HepG2 (cell line): ENCODE measurements at regions of chr20 and their contacts with region 1.

Region 1: GRCh38 chr20:32743237-32744112 is at the start of gene COMMD7:
- DNase-seq: peak; percentile 50
- ATAC-seq: peak; percentile 88
- H3K4me3 ChIP-seq: peak within 1 kb of the TSS; percentile 80 to 99 (median 94)
- H3K27ac ChIP-seq: peak within 1 kb of the TSS; percentile 44
- H3K4me1 ChIP-seq: peaks cover 54% of the 10 kb centered on the region
- H3K27me3 ChIP-seq: no peaks in the 10 kb centered on the region; a peak in 1 of 5 replicates
- CTCF ChIP-seq: no peak
- EP300 ChIP-seq: no peak
- POLR2A ChIP-seq: peak; percentile 3 to 44; a peak in 2 of 4 replicates
- RAD21 ChIP-seq: peak; percentile 79
- total RNA-seq, gene COMMD7: 42.1 and 50.7 TPM in 2 replicates

Region 2: GRCh38 chr20:32674362-32674789 is 69.1 kb before region 1 on chr20:
- CTCF ChIA-PET with region 1: no interaction called
- POLR2A ChIA-PET with region 1: interaction called, 4 read pairs
- in situ Hi-C with region 1: no loop called
- intact Hi-C with region 1: loop called (anchors 2 kb)
- DNase-seq: peak; percentile 64
- ATAC-seq: peak; percentile 51
- H3K4me3 ChIP-seq: peak overlapping the region in 1 of 3 experiments; percentile 71; a peak in 1 of 6 replicates
- H3K27ac ChIP-seq: no peak overlapping the region
- H3K4me1 ChIP-seq: peaks cover 65% of the 10 kb centered on the region
- H3K27me3 ChIP-seq: no peaks in the 10 kb centered on the region
- CTCF ChIP-seq: peak; percentile 92
- EP300 ChIP-seq: no peak
- POLR2A ChIP-seq: no peak
- RAD21 ChIP-seq: peak; percentile 98

Region 3: GRCh38 chr20:32718731-32719348 is 24.6 kb before region 1 on chr20:
- CTCF ChIA-PET with region 1: no interaction called
- POLR2A ChIA-PET with region 1: no interaction called
- in situ Hi-C with region 1: no loop called
- intact Hi-C with region 1: no loop called
- DNase-seq: no peak
- ATAC-seq: no peak
- H3K4me3 ChIP-seq: no peak overlapping the region
- H3K27ac ChIP-seq: no peak overlapping the region
- H3K4me1 ChIP-seq: peaks cover 8% of the 10 kb centered on the region
- H3K27me3 ChIP-seq: no peaks in the 10 kb centered on the region
- CTCF ChIP-seq: no peak
- EP300 ChIP-seq: no peak
- POLR2A ChIP-seq: no peak
- RAD21 ChIP-seq: no peak

Region 4: GRCh38 chr20:32731393-32732266 is 11.8 kb before region 1 on chr20:
- CTCF ChIA-PET with region 1: no interaction called
- POLR2A ChIA-PET with region 1: interaction called, 12 read pairs
- in situ Hi-C with region 1: no loop called
- intact Hi-C with region 1: no loop called
- DNase-seq: peak; percentile 89
- ATAC-seq: peak; percentile 88
- H3K4me3 ChIP-seq: no peak overlapping the region
- H3K27ac ChIP-seq: peak overlapping the region; percentile 32
- H3K4me1 ChIP-seq: peaks cover 16% of the 10 kb centered on the region
- H3K27me3 ChIP-seq: no peaks in the 10 kb centered on the region
- CTCF ChIP-seq: 0 out of 2 replicates have a peak, but pooled peaks have one; percentile 14
- EP300 ChIP-seq: peak in 1 of 2 experiments; percentile 77; a peak in 1 of 4 replicates
- POLR2A ChIP-seq: peak in 1 of 2 experiments; percentile 32; a peak in 1 of 4 replicates
- RAD21 ChIP-seq: peak; percentile 37; the same call in 1 of the 2 replicates

Region 5: DNA sequence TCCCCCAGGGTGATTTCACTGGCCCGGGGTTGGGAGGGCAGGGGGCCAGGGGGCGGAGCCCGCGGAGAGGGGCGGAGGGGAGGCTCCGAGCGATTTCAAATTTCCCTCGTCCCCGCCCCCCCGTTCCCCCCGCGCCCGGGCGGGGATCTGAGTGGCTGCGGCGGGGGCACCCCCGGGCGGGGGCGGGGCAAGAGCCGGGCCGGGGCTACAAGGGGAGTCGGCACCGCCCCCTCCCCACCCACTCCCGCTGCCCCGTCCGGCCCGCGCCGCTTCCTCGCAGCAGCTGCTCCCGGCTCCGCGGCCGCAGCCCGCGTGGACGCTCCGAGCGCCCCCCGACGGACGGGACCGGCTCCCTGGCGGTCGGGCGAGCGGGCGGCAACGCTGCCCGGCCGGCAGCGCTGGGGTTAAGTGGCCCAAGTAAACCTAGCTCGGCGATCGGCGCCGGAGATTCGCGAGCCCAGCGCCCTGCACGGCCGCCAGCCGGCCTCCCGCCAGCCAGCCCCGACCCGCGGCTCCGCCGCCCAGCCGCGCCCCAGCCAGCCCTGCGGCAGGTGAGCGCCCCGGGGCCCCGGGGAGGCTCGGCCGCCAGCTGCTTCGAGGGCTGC is 18.8 kb after region 1 on chr20 and contains the start of gene DNMT3B:
- CTCF ChIA-PET with region 1: no interaction called
- POLR2A ChIA-PET with region 1: interaction called, 21 read pairs
- in situ Hi-C with region 1: no loop called
- intact Hi-C with region 1: loop called (anchors 1 kb)
- DNase-seq: peak; percentile 60
- ATAC-seq: peak; percentile 79
- H3K4me3 ChIP-seq: peak within 1 kb of the TSS; percentile 75 to 95 (median 95)
- H3K27ac ChIP-seq: peak within 1 kb of the TSS; percentile 24
- H3K4me1 ChIP-seq: peaks cover 62% of the 10 kb centered on the region
- H3K27me3 ChIP-seq: no peaks in the 10 kb centered on the region; a peak in 1 of 5 replicates
- CTCF ChIP-seq: peak; percentile 49; the same call in 1 of the 2 replicates
- EP300 ChIP-seq: no peak
- POLR2A ChIP-seq: peak; percentile 25 to 76; a peak in 2 of 4 replicates
- RAD21 ChIP-seq: peak; percentile 95
- total RNA-seq, gene DNMT3B: 13.2 and 13.9 TPM in 2 replicates

Region 6: DNA sequence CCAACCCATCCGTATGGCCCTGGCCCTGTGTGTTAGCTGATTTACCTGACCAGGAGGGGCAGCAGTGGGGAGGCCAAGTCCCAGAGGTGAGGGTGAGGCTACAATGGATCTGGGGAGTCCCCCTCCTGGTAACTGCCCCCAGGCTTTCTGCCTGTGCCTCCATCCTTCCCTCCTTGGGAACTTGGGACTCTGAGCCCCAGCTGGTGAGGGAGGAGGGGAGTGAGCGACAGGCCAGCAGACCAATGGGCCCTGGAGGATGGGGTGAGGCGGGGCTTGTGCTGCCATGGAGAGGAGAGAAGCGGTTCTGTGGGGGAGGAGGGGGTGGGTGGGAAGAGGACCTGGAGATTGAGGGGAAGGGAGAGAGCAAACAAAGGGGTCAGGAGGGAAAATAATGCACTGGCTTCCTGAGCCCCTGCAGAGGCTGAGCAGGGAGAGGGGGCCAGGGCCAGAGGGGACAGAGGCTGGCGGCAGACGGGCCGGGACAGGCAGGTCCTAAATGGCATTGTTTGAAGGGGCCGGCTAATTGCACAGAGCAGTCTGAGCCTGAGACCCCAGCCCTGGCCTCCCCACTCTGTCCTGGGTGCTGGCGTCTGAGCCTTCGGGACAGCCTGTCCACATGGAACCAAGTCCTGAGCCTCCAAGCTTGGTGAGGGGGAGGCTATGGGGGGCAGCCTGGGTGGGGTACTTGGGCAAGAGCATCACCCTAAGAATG is 36.2 kb after region 1 on chr20:
- CTCF ChIA-PET with region 1: interaction called, 6 read pairs
- POLR2A ChIA-PET with region 1: interaction called, 5 read pairs
- in situ Hi-C with region 1: no loop called
- intact Hi-C with region 1: loop called (anchors 5 kb)
- DNase-seq: no peak
- ATAC-seq: peak; percentile 7; the same call in 1 of the 3 replicates
- H3K4me3 ChIP-seq: no peak overlapping the region
- H3K27ac ChIP-seq: no peak overlapping the region
- H3K4me1 ChIP-seq: peaks cover 35% of the 10 kb centered on the region
- H3K27me3 ChIP-seq: no peaks in the 10 kb centered on the region
- CTCF ChIP-seq: no peak; the same call in 1 of the 2 replicates
- EP300 ChIP-seq: no peak
- POLR2A ChIP-seq: no peak
- RAD21 ChIP-seq: no peak